CD4-positive, alpha-beta memory T cell (primary cell): ENCODE measurements at regions of chr13 and their contacts with region 1.

Region 1: DNA sequence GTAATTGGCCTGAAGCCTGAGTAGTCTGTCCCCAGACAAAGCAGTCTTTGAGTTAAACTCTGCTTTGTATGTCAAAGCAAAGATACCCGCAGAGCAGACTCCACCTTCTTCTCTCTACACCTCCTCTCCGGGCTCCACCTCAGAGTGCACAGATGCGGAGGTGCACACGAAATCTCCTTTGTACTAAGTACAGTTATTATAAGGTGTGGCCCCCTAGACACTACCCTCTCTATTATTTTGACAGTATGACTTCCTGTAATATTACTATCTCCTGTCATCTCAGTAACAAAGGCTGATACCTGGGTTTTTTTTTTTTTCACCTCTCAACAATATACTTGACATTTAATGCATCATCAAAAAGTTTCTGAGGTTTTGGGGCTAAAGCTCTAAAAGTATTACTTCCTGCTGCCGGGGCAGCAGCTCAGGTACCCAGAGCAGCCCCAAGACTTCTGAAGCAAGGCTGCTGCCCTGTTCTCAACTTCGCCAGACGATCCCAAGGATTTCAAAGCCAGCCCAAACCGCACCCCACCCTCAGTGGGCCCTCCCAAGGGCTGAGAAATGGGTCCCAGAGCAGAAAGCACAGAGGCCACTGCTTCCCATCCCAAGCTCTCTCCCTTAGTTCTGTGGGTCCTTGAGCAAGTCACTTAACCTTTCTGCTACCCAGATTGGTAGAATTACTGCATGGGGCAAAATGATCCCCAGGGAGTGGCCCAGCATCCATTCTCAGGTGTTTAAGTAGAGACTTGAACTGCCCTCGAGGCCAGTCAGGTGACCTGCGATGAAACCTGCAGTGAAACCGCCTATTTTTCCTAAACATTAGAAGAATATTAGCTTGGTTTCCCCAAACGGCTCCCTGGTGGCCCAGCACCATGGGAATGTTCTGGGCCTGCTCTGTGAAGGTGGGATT is 180.6 kb downstream of the FOXO1 start:
- DNase-seq: peak; percentile 81 to 92 (median 91)
- H3K4me3 ChIP-seq: peak overlapping the region; percentile 0 to 29
- H3K4me3 Mint-ChIP-seq: peak overlapping the region; percentile 59 to 93 (median 82)
- H3K27ac ChIP-seq: peak overlapping the region; percentile 68
- H3K27ac Mint-ChIP-seq: peak overlapping the region; percentile 89 to 99 (median 98)
- H3K4me1 ChIP-seq: peaks cover 87% of the 10 kb centered on the region
- H3K4me1 Mint-ChIP-seq: peaks cover 53 to 96% (median 85%) of the 10 kb centered on the region in 4 donors
- H3K27me3 ChIP-seq: no peaks in the 10 kb centered on the region
- H3K27me3 Mint-ChIP-seq: no peaks in the 10 kb centered on the region

Region 2: GRCh38 chr13:39777527-39778061 is 708.3 kb before region 1 on chr13:
- CTCF ChIA-PET with region 1: no interaction called
- POLR2A ChIA-PET with region 1: no interaction called
- intact Hi-C with region 1: loop called (anchors 5 kb)
- DNase-seq: peak; percentile 28 to 51 (median 37)
- H3K4me3 ChIP-seq: no peak overlapping the region
- H3K4me3 Mint-ChIP-seq: no peak overlapping the region
- H3K27ac ChIP-seq: no peak overlapping the region
- H3K27ac Mint-ChIP-seq: peak overlapping the region in 5 of 7 donors; percentile 22 to 78 (median 62)
- H3K4me1 ChIP-seq: peaks cover 29% of the 10 kb centered on the region
- H3K4me1 Mint-ChIP-seq: peaks cover 25 to 33% (median 29%) of the 10 kb centered on the region in 4 donors
- H3K27me3 ChIP-seq: no peaks in the 10 kb centered on the region
- H3K27me3 Mint-ChIP-seq: no peaks in the 10 kb centered on the region

Region 3: DNA sequence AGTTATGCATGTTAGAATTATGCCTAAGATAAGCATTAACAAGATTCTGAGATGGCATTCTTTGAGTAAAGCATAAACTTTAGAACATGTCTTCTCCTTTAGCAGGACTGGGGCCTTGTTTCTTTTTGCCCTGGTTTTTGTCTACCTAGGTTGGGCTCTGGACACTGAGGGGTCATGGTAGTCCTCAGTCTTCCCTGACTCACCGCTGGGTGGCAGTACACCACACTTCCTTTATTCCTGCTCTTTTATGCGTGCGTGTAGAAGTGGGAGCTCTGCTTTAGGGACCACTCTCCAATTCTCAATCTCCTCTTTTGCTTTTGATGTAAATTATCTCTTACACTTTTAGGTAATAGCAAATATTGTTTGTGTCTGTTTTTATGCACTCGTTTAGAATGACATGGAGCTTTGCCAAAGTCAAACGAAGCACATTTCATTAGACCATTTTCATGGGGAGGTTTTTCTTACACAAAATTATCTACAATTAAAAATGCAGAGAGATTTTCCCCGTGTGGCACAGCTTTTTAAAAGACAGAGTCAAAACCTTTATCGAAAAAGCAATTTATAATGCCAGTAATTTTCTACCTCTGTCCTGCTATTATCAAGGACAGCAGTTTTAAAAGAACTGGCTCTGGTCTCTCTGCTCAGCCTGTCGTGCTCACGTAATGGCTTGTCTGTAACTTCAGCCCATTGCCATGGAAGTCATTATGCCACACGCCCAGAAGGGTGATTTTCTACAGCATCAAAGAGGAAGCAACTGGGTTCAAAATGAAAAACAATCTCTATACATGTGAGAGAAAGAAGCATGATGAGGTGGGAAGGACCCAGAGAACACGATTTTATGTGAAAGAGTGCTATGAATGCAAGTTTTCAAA is 416.5 kb before region 1 on chr13:
- CTCF ChIA-PET with region 1: interaction called, 15 read pairs
- POLR2A ChIA-PET with region 1: no interaction called
- intact Hi-C with region 1: loop called (anchors 1 kb)
- DNase-seq: peak; percentile 53 to 71 (median 66)
- H3K4me3 ChIP-seq: no peak overlapping the region
- H3K4me3 Mint-ChIP-seq: peak overlapping the region in 6 of 8 donors; percentile 27 to 67 (median 40)
- H3K27ac ChIP-seq: no peak overlapping the region
- H3K27ac Mint-ChIP-seq: peak overlapping the region in 6 of 7 donors; percentile 6 to 87 (median 72)
- H3K4me1 ChIP-seq: peaks cover 19% of the 10 kb centered on the region
- H3K4me1 Mint-ChIP-seq: peaks cover 11 to 24% (median 16%) of the 10 kb centered on the region in 4 donors
- H3K27me3 ChIP-seq: no peaks in the 10 kb centered on the region
- H3K27me3 Mint-ChIP-seq: no peaks in the 10 kb centered on the region

Region 4: GRCh38 chr13:40388617-40389016 is 97.2 kb before region 1 on chr13:
- CTCF ChIA-PET with region 1: no interaction called
- POLR2A ChIA-PET with region 1: interaction called, 30 read pairs
- intact Hi-C with region 1: loop called (anchors 1 kb)
- DNase-seq: peak; percentile 83 to 93 (median 88)
- H3K4me3 ChIP-seq: peak overlapping the region in 1 of 2 donors; percentile 85
- H3K4me3 Mint-ChIP-seq: peak overlapping the region; percentile 83 to 92 (median 90)
- H3K27ac ChIP-seq: peak overlapping the region; percentile 95
- H3K27ac Mint-ChIP-seq: peak overlapping the region; percentile 89 to 100 (median 99)
- H3K4me1 ChIP-seq: peaks cover 34% of the 10 kb centered on the region
- H3K4me1 Mint-ChIP-seq: peaks cover 31 to 58% (median 39%) of the 10 kb centered on the region in 4 donors
- H3K27me3 ChIP-seq: no peaks in the 10 kb centered on the region
- H3K27me3 Mint-ChIP-seq: no peaks in the 10 kb centered on the region

Region 5: DNA sequence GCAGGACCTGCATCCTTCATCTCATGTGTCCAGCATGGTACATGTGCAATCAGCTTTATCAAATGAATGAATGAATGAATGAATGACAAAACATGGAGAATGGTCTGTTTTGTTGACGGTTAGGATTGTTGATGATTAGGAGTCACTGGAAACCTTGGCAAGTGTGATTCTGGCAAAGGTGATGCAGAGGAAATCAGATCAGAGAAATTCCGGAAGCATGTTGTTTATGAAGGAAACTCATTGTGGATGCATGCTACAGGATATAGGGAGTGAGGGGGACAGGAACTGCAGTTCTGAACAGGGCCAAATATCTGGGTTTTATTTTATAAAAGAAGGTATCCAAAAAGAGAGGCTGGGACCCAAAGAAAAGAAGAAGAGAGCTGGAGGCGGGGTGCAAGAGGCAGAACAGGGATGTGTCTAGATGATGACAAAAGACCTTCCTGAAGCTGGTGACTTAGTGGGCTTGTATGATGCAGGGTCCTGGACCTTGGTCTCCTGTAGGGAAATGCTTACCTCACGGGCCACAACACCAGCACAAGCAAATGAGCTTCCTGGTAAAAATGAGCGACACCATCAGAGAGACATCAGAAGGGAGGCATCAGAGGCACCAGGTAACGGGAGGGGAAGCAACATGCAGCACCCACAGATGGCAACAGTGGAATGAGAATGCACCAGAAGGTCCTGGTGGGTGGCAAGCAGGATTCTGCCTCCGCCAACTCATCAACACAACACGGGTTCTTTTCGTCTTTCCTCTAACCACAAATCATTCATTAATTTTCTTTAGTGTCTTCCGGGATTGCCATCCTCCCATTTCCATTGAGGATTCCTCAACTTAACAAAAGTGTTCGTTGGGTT is 21.0 kb after region 1 on chr13:
- CTCF ChIA-PET with region 1: interaction called, 5 read pairs
- POLR2A ChIA-PET with region 1: interaction called, 3 read pairs
- intact Hi-C with region 1: loop called (anchors 2 kb)
- DNase-seq: no peak
- H3K4me3 ChIP-seq: no peak overlapping the region
- H3K4me3 Mint-ChIP-seq: no peak overlapping the region
- H3K27ac ChIP-seq: no peak overlapping the region
- H3K27ac Mint-ChIP-seq: peak overlapping the region in 2 of 7 donors; percentile 41 to 46
- H3K4me1 ChIP-seq: peaks cover 17% of the 10 kb centered on the region
- H3K4me1 Mint-ChIP-seq: peaks cover 22 to 39% (median 25%) of the 10 kb centered on the region in 4 donors
- H3K27me3 ChIP-seq: no peaks in the 10 kb centered on the region
- H3K27me3 Mint-ChIP-seq: no peaks in the 10 kb centered on the region

Region 6: DNA sequence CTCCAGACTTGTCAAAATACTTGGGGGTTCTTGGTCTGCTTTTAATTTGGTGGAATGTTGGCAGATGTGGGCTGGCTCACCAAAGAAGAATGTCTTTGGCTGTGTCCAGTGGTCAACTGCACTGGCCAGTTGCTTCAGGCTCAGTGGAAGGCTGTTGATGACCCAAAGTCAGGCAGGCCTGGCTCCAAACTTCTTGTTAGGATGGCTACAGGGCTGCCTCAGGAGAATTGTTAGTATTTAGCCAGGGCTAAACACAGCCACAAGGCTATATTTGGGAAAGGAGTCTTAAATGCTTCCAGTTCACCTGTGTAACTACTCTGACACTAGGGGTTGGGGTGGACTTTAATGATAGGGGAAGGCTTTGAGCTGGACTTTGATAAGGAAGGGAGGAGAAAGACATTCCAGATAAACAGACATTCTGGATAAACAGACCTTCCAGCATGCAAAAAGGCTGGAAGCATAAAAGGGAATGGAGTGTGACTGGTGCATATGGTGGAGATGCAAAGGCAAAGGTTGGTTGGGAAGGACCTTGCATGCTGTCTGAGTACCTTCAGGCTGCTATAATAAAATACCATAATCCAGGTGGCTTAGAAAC is 63.7 kb after region 1 on chr13:
- CTCF ChIA-PET with region 1: no interaction called
- POLR2A ChIA-PET with region 1: interaction called, 3 read pairs
- intact Hi-C with region 1: loop called (anchors 5 kb)
- DNase-seq: no peak
- H3K4me3 ChIP-seq: no peak overlapping the region
- H3K4me3 Mint-ChIP-seq: peak overlapping the region in 1 of 8 donors; percentile 24
- H3K27ac ChIP-seq: no peak overlapping the region
- H3K27ac Mint-ChIP-seq: peak overlapping the region in 3 of 7 donors; percentile 20 to 38 (median 28)
- H3K4me1 ChIP-seq: no peaks in the 10 kb centered on the region
- H3K4me1 Mint-ChIP-seq: peaks cover 13 to 52% (median 31%) of the 10 kb centered on the region in 4 donors
- H3K27me3 ChIP-seq: no peaks in the 10 kb centered on the region
- H3K27me3 Mint-ChIP-seq: no peaks in the 10 kb centered on the region